Sciatic nerve (tissue), 2 donors: ENCODE measurements at regions of chr15 and their contacts with region 1.

Region 1: GRCh38 chr15:54428596-54428995 is 450.4 kb downstream of the UNC13C start:
- DNase-seq: no peak
- ATAC-seq: no peak

Region 2: DNA sequence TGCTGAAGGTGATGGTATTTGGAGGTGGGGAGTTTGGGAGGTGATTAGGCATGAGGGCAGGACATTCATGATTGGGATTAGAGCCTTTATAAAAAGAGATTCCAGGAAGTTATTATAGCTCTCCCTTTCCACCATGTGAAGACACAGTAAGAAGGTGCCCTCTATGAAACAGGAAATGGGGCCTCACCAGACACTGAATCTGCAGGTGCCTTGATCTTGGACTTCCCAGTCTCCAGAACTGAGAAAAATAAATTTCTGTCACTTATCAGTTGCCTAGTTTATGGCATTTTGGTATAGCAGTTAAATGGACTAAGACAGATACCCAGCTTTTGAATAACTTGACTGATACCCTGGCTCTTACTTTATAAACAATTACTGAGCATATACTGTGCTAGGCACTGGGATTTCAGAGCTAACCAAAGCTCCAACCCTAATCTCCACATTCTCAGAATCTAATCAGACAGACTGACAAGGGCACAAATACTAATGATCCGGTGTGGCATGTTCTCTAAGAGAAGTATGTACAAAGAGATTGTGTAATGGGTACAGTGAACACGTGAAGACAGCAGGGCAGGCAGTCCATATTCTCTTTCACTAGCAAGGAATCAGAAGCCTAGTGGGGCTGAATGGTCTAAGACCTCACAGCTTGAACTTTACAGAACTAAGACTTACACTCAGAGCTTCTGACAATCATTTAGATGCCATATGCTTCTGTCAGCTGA is 1012.2 kb before region 1 on chr15:
- intact Hi-C with region 1: loop called (anchors 5 kb)
- DNase-seq: no peak
- ATAC-seq: no peak

Region 3: GRCh38 chr15:54687628-54688027 is 259.0 kb after region 1 on chr15:
- intact Hi-C with region 1: no loop called
- DNase-seq: no peak
- ATAC-seq: no peak